ENCODE measurements at regions of chr5 and their contacts with region 1.

Region 1: GRCh38 chr5:78984439-78985115 is 533 bp downstream of the ARSB start:
- DNase-seq: peak; percentile 87
- H3K4me3 ChIP-seq: peak overlapping the region; percentile 71 to 96 (median 80)
- H3K27ac ChIP-seq: peak overlapping the region; percentile 88
- H3K4me1 ChIP-seq: peaks cover 19% of the 10 kb centered on the region
- H3K27me3 ChIP-seq: no peaks in the 10 kb centered on the region
- CTCF ChIP-seq: peak in 1 of 2 donors; percentile 45
- POLR2A ChIP-seq: peak; percentile 6

Region 2: GRCh38 chr5:78359831-78360673 is 624.5 kb before region 1 on chr5 and contains the start of gene SCAMP1:
- CTCF ChIA-PET with region 1: interaction called, 3 read pairs
- POLR2A ChIA-PET with region 1: no interaction called
- dilution Hi-C with region 1: no loop called
- intact Hi-C with region 1: loop called (anchors 10 kb)
- DNase-seq: peak; percentile 95
- H3K4me3 ChIP-seq: peak within 1 kb of the TSS; percentile 72 to 95 (median 75)
- H3K27ac ChIP-seq: peak within 1 kb of the TSS; percentile 65
- H3K4me1 ChIP-seq: peaks cover 14% of the 10 kb centered on the region
- H3K27me3 ChIP-seq: no peaks in the 10 kb centered on the region
- CTCF ChIP-seq: peak; percentile 10 to 28
- POLR2A ChIP-seq: peak; percentile 73
- total RNA-seq, gene SCAMP1: 29.0 and 30.7 TPM in 2 replicates

Region 3: DNA sequence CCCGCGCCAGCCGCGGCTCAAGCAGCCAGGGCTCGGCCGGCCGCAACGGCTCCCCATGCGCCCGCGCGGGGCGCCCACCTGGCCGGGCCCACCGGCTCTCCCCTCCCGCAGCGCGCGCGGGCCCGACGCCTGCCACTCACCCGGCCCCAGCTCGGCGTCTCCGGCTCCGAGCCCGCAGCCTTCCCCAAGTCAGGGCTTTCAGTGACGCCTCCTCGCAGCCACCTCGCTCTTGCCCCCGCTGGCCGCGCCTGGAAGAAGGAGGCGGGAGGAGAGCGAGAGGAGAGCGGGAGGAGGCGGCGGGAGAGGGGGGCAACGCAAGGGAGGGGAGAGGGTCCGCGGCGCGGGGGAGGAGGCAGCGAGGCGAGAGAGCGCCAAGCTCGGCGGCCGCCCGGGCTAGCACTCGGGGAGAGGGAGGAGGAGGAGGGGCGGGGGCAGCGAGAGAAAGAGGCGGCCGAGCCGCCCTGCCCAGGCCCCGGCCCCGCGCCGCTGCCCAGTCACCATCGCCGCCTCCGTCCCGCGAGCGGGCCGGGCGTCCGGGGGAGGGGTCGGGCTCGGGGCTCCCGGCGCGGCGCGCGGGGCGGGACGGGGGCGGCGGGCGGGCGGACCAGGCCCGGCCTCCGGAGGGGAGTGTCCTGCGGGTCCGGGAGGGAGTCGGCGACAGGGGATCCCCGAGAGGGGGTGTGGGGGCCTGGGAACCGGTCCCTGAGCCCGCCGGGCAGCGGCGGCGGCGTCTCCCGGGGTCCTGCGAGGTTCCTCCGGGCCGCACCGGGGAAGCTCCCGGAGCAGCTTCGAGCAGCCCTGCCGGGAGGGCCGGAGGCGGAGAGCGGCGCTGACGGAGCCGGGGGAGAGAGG is 336.0 kb before region 1 on chr5 and contains the start of gene LHFPL2:
- CTCF ChIA-PET with region 1: interaction called, 4 read pairs
- POLR2A ChIA-PET with region 1: no interaction called
- dilution Hi-C with region 1: no loop called
- intact Hi-C with region 1: loop called (anchors 5 kb)
- DNase-seq: peak; percentile 77
- H3K4me3 ChIP-seq: peak within 1 kb of the TSS; percentile 38 to 78 (median 62)
- H3K27ac ChIP-seq: peak within 1 kb of the TSS; percentile 82
- H3K4me1 ChIP-seq: peaks cover 19% of the 10 kb centered on the region
- H3K27me3 ChIP-seq: no peaks in the 10 kb centered on the region
- CTCF ChIP-seq: no peak
- POLR2A ChIP-seq: no peak
- total RNA-seq, gene LHFPL2: 26.8 and 36.3 TPM in 2 replicates

Region 4: DNA sequence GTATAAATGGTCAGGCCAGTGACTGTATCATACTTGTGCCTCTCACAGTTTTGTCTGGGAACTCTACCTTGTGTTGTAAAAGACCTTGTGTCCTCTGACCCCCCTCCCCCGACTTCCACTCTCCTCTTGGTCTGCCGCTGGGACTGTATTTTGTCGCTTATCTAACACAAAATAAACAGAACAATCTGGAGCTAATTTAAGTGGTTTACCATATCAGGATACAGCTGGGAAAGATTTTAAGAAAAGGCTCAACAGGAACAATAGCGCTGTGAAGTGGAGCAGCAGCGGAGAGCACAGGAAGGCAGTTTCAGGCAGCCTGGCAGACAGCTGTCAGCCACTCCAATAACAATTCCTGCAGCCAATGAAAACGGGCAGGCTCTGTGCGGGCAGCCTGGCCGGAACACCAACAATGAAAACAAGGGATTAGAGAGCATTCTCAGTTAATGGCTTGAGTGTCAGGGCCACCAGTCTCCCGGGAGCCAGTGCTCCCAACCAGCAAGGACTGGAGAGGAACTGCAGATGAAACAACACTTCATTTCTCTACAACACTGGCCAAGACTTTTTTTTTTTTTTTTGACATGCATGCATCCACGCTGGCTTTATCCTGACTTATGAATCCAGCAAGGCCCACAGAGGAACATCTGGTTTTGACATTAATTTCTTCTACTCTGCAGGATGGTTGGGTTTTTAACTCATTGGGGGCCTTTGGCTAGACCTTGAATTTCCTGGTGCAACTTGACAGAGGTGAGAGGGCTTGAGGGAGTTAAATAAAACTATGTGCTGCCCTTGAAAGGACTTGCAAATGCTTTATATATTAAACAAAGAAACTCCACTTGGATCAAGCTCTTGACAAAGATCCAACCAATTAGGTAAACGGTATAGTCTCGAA is 76.2 kb before region 1 on chr5:
- CTCF ChIA-PET with region 1: interaction called, 4 read pairs
- POLR2A ChIA-PET with region 1: no interaction called
- dilution Hi-C with region 1: no loop called
- intact Hi-C with region 1: loop called (anchors 1 kb)
- DNase-seq: peak; percentile 98
- H3K4me3 ChIP-seq: no peak overlapping the region
- H3K27ac ChIP-seq: peak overlapping the region; percentile 85
- H3K4me1 ChIP-seq: peaks cover 18% of the 10 kb centered on the region
- H3K27me3 ChIP-seq: no peaks in the 10 kb centered on the region
- CTCF ChIP-seq: no peak
- POLR2A ChIP-seq: no peak

Region 5: DNA sequence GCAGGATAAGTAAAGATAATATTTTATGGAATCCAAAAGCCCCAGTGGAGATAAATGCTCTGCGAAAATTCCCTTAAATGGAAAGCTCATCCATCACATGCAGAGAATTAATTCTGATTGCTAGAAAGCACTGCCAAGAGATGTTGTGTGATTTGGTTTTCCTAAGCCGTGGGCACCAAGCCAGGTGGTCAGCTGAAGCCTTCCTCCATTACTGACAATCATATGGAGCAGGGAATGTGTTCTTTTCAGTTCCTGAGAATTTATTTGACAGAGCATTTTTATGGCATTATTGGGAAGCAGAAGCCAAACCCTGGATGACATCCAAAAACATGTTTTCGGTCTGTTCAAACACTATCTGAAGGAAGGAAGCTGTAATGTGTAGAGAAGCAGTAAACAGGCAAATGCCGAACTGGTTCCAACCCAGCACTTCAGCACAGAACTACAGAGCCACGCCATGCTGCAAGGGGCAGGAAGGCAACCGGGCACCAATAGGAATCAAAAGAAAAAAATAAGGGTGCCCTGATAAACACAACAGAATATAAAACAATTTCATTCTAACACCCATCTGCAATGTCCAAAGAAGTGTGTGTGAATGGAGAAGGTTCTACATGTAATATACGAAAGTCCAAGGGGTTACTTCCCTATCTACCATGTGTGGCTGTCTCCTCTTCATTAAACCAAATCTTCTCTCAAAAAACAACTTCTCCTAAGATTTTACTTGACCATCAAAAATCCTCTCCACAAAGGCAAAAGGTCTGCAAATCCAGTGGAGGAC is 11.7 kb before region 1 on chr5:
- CTCF ChIA-PET with region 1: interaction called, 10 read pairs
- POLR2A ChIA-PET with region 1: interaction called, 6 read pairs
- dilution Hi-C with region 1: no loop called
- intact Hi-C with region 1: loop called (anchors 1 kb)
- DNase-seq: peak; percentile 99
- H3K4me3 ChIP-seq: peak overlapping the region in 1 of 3 experiments; percentile 15
- H3K27ac ChIP-seq: peak overlapping the region; percentile 4
- H3K4me1 ChIP-seq: peaks cover 12% of the 10 kb centered on the region
- H3K27me3 ChIP-seq: no peaks in the 10 kb centered on the region
- CTCF ChIP-seq: no peak
- POLR2A ChIP-seq: no peak

Region 6: GRCh38 chr5:79235634-79236363 is 251.2 kb after region 1 on chr5 and contains the start of gene JMY:
- CTCF ChIA-PET with region 1: no interaction called
- POLR2A ChIA-PET with region 1: no interaction called
- dilution Hi-C with region 1: no loop called
- intact Hi-C with region 1: loop called (anchors 2 kb)
- DNase-seq: peak; percentile 81
- H3K4me3 ChIP-seq: peak within 1 kb of the TSS; percentile 36 to 73 (median 64)
- H3K27ac ChIP-seq: peak within 1 kb of the TSS; percentile 54
- H3K4me1 ChIP-seq: peaks cover 10% of the 10 kb centered on the region
- H3K27me3 ChIP-seq: no peaks in the 10 kb centered on the region
- CTCF ChIP-seq: peak in 1 of 2 donors; percentile 22
- POLR2A ChIP-seq: peak; percentile 87
- total RNA-seq, gene JMY: 6.3 and 6.5 TPM in 2 replicates

Region 7: GRCh38 chr5:79514391-79515105 is 530.0 kb after region 1 on chr5:
- CTCF ChIA-PET with region 1: no interaction called
- POLR2A ChIA-PET with region 1: no interaction called
- dilution Hi-C with region 1: no loop called
- intact Hi-C with region 1: loop called (anchors 2 kb)
- DNase-seq: peak; percentile 86
- H3K4me3 ChIP-seq: peak overlapping the region; percentile 80 to 89 (median 87)
- H3K27ac ChIP-seq: peak overlapping the region; percentile 68
- H3K4me1 ChIP-seq: peaks cover 23% of the 10 kb centered on the region
- H3K27me3 ChIP-seq: peaks cover 0 to 2% of the 10 kb centered on the region in 2 experiments
- CTCF ChIP-seq: no peak
- POLR2A ChIP-seq: peak; percentile 11